Mucosa of descending colon (tissue), 3 donors: ENCODE measurements at regions of chr4 and their contacts with region 1.

Region 1: GRCh38 chr4:87375719-87376291 is 15.2 kb downstream of the HSD17B11 start:
- DNase-seq: peak in 1 of 3 donors; percentile 63
- ATAC-seq: peak; percentile 96
- H3K4me3 ChIP-seq: no peak overlapping the region
- H3K4me1 ChIP-seq: peaks cover 7% of the 10 kb centered on the region
- CTCF ChIP-seq: peak; percentile 11

Region 2: DNA sequence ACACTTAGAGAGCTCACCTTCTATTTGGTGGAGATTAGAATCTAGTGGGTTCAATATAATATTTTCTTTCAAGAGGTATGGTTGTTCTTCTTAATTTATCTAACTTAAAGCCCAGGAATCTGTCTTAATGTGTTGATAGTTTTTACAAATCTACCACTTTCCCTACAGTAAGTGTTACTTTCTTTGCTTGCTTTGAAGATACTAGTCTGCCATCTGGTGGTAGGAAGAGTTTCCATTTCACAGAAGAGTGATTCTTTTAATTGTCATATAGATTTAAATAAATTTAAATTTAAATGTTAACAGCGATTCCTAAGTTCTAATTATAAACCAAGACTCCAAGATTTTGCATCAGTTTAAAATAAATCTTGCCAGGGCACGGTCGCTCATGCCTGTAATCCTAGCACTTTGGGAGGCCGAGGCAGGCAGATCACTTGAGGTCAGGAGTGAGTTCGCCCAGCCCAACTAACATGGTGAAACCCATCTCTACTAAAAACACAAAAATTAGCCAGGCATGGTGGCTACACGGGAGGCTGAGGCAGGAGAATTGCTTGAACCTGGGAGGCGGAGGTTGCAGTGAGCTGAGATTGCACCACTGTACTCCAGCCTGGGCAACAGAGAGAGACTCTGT is 90.0 kb after region 1 on chr4:
- intact Hi-C with region 1: loop called (anchors 5 kb)
- DNase-seq: peak in 1 of 3 donors; percentile 55
- ATAC-seq: peak; percentile 56
- H3K4me3 ChIP-seq: no peak overlapping the region
- H3K4me1 ChIP-seq: peaks cover 3% of the 10 kb centered on the region
- CTCF ChIP-seq: peak; percentile 14